SK-N-SH (cell line): ENCODE measurements at regions of chr17 and their contacts with region 1.

Region 1: GRCh38 chr17:40417609-40418427 is at the start of gene TOP2A:
- DNase-seq: peak; percentile 97
- H3K4me3 ChIP-seq: peak within 1 kb of the TSS; percentile 64 to 80
- H3K27ac ChIP-seq: peak within 1 kb of the TSS; percentile 50 to 81
- H3K4me1 ChIP-seq: peaks cover 0 to 10% of the 10 kb centered on the region in 2 experiments; a peak in 2 of 4 replicates
- H3K27me3 ChIP-seq: no peaks in the 10 kb centered on the region
- CTCF ChIP-seq: no peak
- EP300 ChIP-seq: no peak
- RAD21 ChIP-seq: no peak
- polyA plus RNA-seq, gene TOP2A: 20.6 and 23.2 TPM in 2 replicates

Region 2: GRCh38 chr17:40148527-40148926 is 269.3 kb before region 1 on chr17:
- CTCF ChIA-PET with region 1: no interaction called
- POLR2A ChIA-PET with region 1: no interaction called
- DNase-seq: no peak
- H3K4me3 ChIP-seq: no peak overlapping the region
- H3K27ac ChIP-seq: no peak overlapping the region
- H3K4me1 ChIP-seq: no peaks in the 10 kb centered on the region
- H3K27me3 ChIP-seq: no peaks in the 10 kb centered on the region
- CTCF ChIP-seq: no peak
- EP300 ChIP-seq: no peak
- RAD21 ChIP-seq: no peak

Region 3: GRCh38 chr17:40293363-40293762 is 124.5 kb before region 1 on chr17:
- CTCF ChIA-PET with region 1: interaction called, 23 read pairs
- POLR2A ChIA-PET with region 1: no interaction called
- DNase-seq: no peak
- H3K4me3 ChIP-seq: no peak overlapping the region
- H3K27ac ChIP-seq: no peak overlapping the region
- H3K4me1 ChIP-seq: peaks cover 2 to 5% of the 10 kb centered on the region in 2 experiments; a peak in 2 of 4 replicates
- H3K27me3 ChIP-seq: no peaks in the 10 kb centered on the region
- CTCF ChIP-seq: no peak
- EP300 ChIP-seq: no peak
- RAD21 ChIP-seq: no peak

Region 4: GRCh38 chr17:40303009-40303657 is 114.7 kb before region 1 on chr17:
- CTCF ChIA-PET with region 1: interaction called, 12 read pairs
- POLR2A ChIA-PET with region 1: interaction called, 4 read pairs
- DNase-seq: peak; percentile 63
- H3K4me3 ChIP-seq: no peak overlapping the region; a peak in 1 of 4 replicates
- H3K27ac ChIP-seq: peak overlapping the region; percentile 82 to 99
- H3K4me1 ChIP-seq: peaks cover 48 to 53% of the 10 kb centered on the region in 2 experiments
- H3K27me3 ChIP-seq: no peaks in the 10 kb centered on the region
- CTCF ChIP-seq: peak; percentile 86
- EP300 ChIP-seq: 0 out of 4 replicates have a peak, but pooled peaks of 1 of the 2 experiments have one; percentile 45
- RAD21 ChIP-seq: peak; percentile 96

Region 5: DNA sequence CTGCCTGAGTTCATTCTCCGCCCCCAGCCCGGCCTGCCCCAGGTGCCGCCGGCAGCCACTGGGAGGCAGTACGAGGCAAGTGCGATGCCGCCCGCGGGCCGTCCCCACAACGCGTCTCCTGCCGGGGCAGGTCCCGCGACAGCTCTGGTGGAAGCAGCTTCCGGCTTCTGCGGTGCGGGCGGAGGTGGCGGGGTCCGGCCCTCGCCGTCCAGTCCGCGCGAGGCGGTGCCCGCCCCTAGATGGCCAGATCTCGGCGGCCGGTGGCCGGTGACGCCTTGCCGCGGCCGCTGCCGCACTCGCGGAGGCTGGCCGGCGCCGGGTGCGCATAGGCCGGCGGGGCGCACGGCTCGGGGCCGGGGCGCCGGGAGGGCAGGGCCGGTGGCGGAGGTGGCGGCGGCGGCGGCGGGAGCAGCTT is 55.1 kb before region 1 on chr17:
- CTCF ChIA-PET with region 1: interaction called, 175 read pairs
- POLR2A ChIA-PET with region 1: interaction called, 3 read pairs
- DNase-seq: peak; percentile 93
- H3K4me3 ChIP-seq: peak overlapping the region; percentile 57 to 62
- H3K27ac ChIP-seq: no peak overlapping the region
- H3K4me1 ChIP-seq: peaks cover 6 to 16% of the 10 kb centered on the region in 2 experiments; a peak in 2 of 4 replicates
- H3K27me3 ChIP-seq: no peaks in the 10 kb centered on the region
- CTCF ChIP-seq: peak; percentile 72
- EP300 ChIP-seq: no peak
- RAD21 ChIP-seq: peak; percentile 68

Region 6: GRCh38 chr17:40399185-40399584 is 18.6 kb before region 1 on chr17:
- CTCF ChIA-PET with region 1: interaction called, 18 read pairs
- POLR2A ChIA-PET with region 1: no interaction called
- DNase-seq: peak; percentile 48
- H3K4me3 ChIP-seq: no peak overlapping the region
- H3K27ac ChIP-seq: peak overlapping the region in 1 of 2 experiments; percentile 19; a peak in 1 of 4 replicates
- H3K4me1 ChIP-seq: no peaks in the 10 kb centered on the region; a peak in 1 of 4 replicates
- H3K27me3 ChIP-seq: no peaks in the 10 kb centered on the region
- CTCF ChIP-seq: peak; percentile 64
- EP300 ChIP-seq: no peak
- RAD21 ChIP-seq: peak; percentile 69

Region 7: GRCh38 chr17:40433551-40434415 is 16.0 kb after region 1 on chr17:
- CTCF ChIA-PET with region 1: interaction called, 13 read pairs
- POLR2A ChIA-PET with region 1: interaction called, 5 read pairs
- DNase-seq: peak; percentile 58
- H3K4me3 ChIP-seq: no peak overlapping the region
- H3K27ac ChIP-seq: peak overlapping the region; percentile 48 to 99
- H3K4me1 ChIP-seq: peaks cover 9 to 34% of the 10 kb centered on the region in 2 experiments; a peak in 3 of 4 replicates
- H3K27me3 ChIP-seq: no peaks in the 10 kb centered on the region
- CTCF ChIP-seq: peak; percentile 59
- EP300 ChIP-seq: peak in 1 of 2 experiments; percentile 57; a peak in 2 of 4 replicates
- RAD21 ChIP-seq: peak; percentile 52

Region 8: GRCh38 chr17:40443583-40444327 is 25.9 kb after region 1 on chr17:
- CTCF ChIA-PET with region 1: interaction called, 16 read pairs
- POLR2A ChIA-PET with region 1: interaction called, 5 read pairs
- DNase-seq: peak; percentile 92
- H3K4me3 ChIP-seq: peak overlapping the region; percentile 62 to 81
- H3K27ac ChIP-seq: peak overlapping the region; percentile 74 to 77
- H3K4me1 ChIP-seq: peaks cover 3 to 46% of the 10 kb centered on the region in 2 experiments; a peak in 2 of 4 replicates
- H3K27me3 ChIP-seq: no peaks in the 10 kb centered on the region
- CTCF ChIP-seq: peak; percentile 50
- EP300 ChIP-seq: no peak
- RAD21 ChIP-seq: peak; percentile 56